ENCODE measurements at regions of chr4 and their contacts with region 1.

Region 1: GRCh38 chr4:185395956-185396723 is 416 bp upstream of the LRP2BP start:
- DNase-seq: peak; percentile 95 to 98
- ATAC-seq: peak; percentile 87 to 92
- H3K4me3 ChIP-seq: peak overlapping the region; percentile 83 to 95 (median 90)
- H3K27ac ChIP-seq: peak overlapping the region; percentile 98 to 100 (median 100)
- H3K4me1 ChIP-seq: peaks cover 22 to 28% of the 10 kb centered on the region in 2 donors
- H3K27me3 ChIP-seq: no peaks in the 10 kb centered on the region
- CTCF ChIP-seq: peak in 1 of 5 experiments; percentile 17
- POLR2A ChIP-seq: peak; percentile 88 to 94

Region 2: DNA sequence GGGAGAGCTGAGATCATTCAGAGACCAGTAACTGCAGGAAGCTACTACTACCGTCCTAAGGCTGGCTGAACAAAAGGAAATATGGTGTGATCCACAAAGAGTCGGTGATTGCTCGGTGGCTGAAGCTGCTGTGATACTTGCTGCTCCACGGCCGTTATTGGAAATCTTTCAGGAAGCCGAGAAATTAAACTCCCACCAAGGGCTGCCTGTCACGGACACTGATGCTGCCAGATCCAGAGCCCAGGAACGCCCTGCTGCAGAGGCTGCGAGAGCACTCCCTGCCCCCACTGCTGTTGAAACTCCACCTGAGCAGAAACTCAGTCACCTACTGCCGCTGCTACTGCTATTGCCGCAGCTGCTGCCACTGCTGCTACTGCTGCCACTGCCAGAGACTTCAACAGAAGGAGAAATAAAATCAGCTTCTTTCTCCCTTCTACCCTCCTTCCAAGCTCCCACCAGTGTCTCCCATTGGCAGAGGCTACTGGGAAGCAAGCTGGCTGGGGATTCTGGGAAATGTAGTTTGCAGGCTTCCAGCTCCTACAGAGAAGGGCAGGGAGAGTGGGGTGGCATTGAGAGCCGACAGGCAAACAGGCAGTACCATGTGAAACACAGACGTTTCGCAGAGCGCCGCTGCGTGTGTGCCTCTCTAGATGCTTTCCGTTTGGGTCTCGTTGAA is 1052.5 kb before region 1 on chr4:
- in situ Hi-C with region 1: no loop called
- intact Hi-C with region 1: loop called (anchors 10 kb)
- DNase-seq: peak; percentile 77 to 84
- ATAC-seq: peak; percentile 64 to 69
- H3K4me3 ChIP-seq: peak overlapping the region; percentile 56 to 82 (median 67)
- H3K27ac ChIP-seq: peak overlapping the region; percentile 91 to 97 (median 92)
- H3K4me1 ChIP-seq: peaks cover 51 to 54% of the 10 kb centered on the region in 2 donors
- H3K27me3 ChIP-seq: no peaks in the 10 kb centered on the region
- CTCF ChIP-seq: no peak
- POLR2A ChIP-seq: peak; percentile 50 to 69

Region 3: GRCh38 chr4:184825896-184826690 is 570.0 kb before region 1 on chr4 and contains the start of gene ACSL1:
- in situ Hi-C with region 1: no loop called
- intact Hi-C with region 1: loop called (anchors 10 kb)
- DNase-seq: peak; percentile 80 to 91
- ATAC-seq: peak; percentile 74 to 76
- H3K4me3 ChIP-seq: peak within 1 kb of the TSS; percentile 64 to 91 (median 73)
- H3K27ac ChIP-seq: peak within 1 kb of the TSS; percentile 97 to 100 (median 98)
- H3K4me1 ChIP-seq: peaks cover 36 to 42% of the 10 kb centered on the region in 2 donors
- H3K27me3 ChIP-seq: no peaks in the 10 kb centered on the region
- CTCF ChIP-seq: no peak
- POLR2A ChIP-seq: peak; percentile 99
- total RNA-seq, gene ACSL1: 591 to 2,181 (median 1,316) TPM

Region 4: DNA sequence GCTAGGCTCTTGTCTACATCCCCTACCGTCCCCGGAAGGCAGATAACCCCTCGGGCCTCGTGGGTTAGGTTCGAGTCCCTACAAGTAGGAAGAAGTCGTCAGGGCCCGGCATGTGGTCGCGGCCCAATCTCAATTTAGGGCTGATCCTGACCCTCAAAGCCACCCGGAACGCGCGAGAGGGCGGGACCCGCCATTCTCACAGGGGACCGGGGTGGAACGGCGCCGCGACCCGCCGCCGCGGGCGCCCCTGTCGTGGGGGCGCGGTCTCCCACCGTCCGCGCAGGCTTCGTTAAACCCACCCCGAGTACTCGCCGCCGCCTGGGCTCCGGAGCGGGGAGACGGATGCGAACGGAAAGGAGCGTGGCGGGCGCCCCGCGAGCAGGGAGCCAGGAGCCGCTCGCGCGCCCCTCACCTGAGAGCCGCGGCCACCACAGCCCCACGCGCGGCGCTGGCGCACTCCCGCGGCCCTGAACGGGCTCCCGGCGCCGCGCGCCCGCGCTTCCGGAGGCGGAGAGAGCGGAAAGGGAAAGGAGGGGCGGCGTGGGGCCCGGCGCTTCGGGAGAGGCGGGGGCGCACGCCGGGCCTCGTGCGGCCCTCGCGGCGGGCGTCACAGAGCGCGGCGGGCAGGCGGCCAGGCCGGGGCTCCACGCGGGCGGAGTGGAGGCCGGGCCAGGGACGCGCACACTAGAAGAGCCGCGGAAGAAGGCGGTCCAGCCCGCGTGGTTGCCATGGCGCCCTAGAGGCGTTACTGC is 192.5 kb before region 1 on chr4 and contains the start of gene CFAP97:
- in situ Hi-C with region 1: loop called in 3 of 4 experiments (anchors 10 to 25 kb)
- intact Hi-C with region 1: no loop called
- DNase-seq: peak; percentile 70 to 79
- ATAC-seq: peak; percentile 87 to 89
- H3K4me3 ChIP-seq: peak within 1 kb of the TSS; percentile 63 to 87 (median 74)
- H3K27ac ChIP-seq: peak within 1 kb of the TSS; percentile 85 to 99 (median 97)
- H3K4me1 ChIP-seq: peaks cover 10 to 25% of the 10 kb centered on the region in 2 donors
- H3K27me3 ChIP-seq: no peaks in the 10 kb centered on the region
- CTCF ChIP-seq: peak in 2 of 5 experiments; percentile 10 to 13
- POLR2A ChIP-seq: peak; percentile 84 to 87
- total RNA-seq, gene CFAP97: 6.5 to 14.1 (median 10.8) TPM

Region 5: DNA sequence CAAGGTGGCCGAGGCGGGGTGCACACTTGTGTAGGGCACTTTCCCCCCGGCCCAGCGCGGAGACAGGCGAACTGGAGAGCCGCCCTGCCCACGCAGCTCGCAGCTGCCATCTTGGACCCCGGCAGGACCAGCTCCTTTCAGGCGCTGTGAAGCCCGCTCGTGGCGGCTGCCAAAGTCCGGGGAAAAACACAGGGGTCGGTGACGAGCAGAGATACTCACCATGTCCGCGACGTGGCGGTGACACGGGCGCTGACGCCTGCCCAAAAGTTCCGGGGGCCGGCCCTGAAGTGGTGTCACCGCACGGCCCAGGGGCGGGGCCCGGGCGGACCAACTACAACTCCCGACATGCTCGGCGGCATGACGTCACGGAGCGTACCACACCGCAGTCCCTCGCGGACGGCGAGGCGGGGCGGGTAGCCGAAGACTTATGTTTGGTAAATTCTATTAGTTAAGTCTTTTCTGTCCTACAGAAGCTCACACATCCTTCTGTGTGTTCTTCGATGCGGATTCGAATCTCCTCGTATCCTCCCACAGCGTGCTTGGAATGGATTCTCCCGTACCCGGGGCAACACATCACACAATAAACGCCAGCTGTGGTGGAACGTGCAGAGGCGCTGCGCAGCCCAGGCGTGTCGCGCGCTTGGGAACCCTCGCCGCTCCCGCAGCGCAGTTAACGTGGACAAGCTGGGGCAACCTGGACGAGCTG is 29.7 kb after region 1 on chr4 and contains the start of gene UFSP2:
- in situ Hi-C with region 1: no loop called
- intact Hi-C with region 1: loop called (anchors 1 kb)
- DNase-seq: peak; percentile 72 to 84
- ATAC-seq: peak; percentile 95 to 96
- H3K4me3 ChIP-seq: peak within 1 kb of the TSS; percentile 65 to 95 (median 85)
- H3K27ac ChIP-seq: peak within 1 kb of the TSS; percentile 89 to 99 (median 94)
- H3K4me1 ChIP-seq: peaks cover 18 to 28% of the 10 kb centered on the region in 2 donors
- H3K27me3 ChIP-seq: no peaks in the 10 kb centered on the region
- CTCF ChIP-seq: peak in 1 of 5 experiments; percentile 16
- POLR2A ChIP-seq: peak; percentile 80 to 85
- total RNA-seq, gene UFSP2: 36.3 to 56.5 (median 40.1) TPM

Region 6: GRCh38 chr4:185597532-185598188 is 201.5 kb after region 1 on chr4:
- in situ Hi-C with region 1: no loop called
- intact Hi-C with region 1: loop called (anchors 10 kb)
- DNase-seq: peak; percentile 52 to 69
- ATAC-seq: peak; percentile 74 to 86
- H3K4me3 ChIP-seq: no peak overlapping the region
- H3K27ac ChIP-seq: peak overlapping the region in 3 of 4 donors; percentile 47 to 59 (median 49)
- H3K4me1 ChIP-seq: peaks cover 4 to 11% of the 10 kb centered on the region in 2 donors
- H3K27me3 ChIP-seq: no peaks in the 10 kb centered on the region
- CTCF ChIP-seq: peak; percentile 95 to 100 (median 98)
- POLR2A ChIP-seq: no peak